Gastrocnemius medialis (tissue), 4 donors: ENCODE measurements at regions of chr19 and their contacts with region 1.

Region 1: GRCh38 chr19:56121180-56122167 is at the start of gene ZNF787:
- DNase-seq: peak; percentile 95 to 99
- ATAC-seq: peak; percentile 77 to 85
- H3K4me3 ChIP-seq: peak within 1 kb of the TSS; percentile 79 to 93 (median 88)
- H3K27ac ChIP-seq: peak within 1 kb of the TSS; percentile 92 to 99 (median 98)
- H3K4me1 ChIP-seq: peaks cover 35 to 54% of the 10 kb centered on the region in 2 donors
- H3K27me3 ChIP-seq: no peaks in the 10 kb centered on the region
- CTCF ChIP-seq: no peak
- POLR2A ChIP-seq: peak; percentile 54 to 60
- total RNA-seq, gene ZNF787: 16.7 to 43.0 (median 26.5) TPM

Region 2: DNA sequence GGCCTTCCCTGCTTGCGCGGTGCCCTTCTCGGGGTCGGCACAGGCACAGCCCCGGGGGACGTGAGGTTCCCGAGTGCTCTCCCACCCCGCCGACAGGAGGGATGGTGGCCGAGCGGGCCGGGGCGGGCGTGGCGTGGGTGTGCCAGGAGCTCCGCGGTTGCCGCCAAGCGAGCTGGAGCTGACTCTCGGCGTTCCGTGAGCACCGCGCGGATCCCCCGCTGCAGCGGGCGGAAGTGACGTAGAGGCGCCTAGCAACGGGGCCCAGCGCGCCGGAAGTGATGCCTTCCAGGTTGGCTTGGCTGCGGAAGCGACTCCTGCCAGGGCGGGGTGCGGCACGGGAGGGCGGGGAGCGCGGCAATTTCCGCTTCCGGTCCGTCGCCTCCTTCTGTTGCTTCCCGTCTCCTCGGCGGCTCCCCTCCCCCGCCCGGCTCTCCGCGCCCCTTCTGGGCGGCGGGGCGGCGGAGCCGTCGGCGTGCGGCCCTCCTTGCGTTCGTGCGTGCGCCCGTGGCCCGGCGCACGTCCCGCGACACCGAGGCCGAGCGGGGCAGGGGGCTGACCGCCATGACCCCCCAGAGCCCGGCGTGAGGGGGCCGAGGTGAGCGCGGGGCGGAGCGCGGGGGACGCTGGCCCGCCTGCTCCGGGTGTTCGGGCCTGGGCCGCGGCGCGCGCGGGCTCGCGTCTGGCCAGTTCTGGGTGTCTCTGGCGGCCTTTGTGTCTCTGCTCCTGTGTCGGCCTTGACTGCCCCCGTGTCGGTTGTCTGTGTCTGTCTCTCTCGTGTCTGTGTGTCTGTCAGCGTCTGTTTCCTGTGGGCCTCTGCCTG is 446.4 kb before region 1 on chr19 and contains the start of gene EPN1:
- in situ Hi-C with region 1: no loop called
- intact Hi-C with region 1: loop called (anchors 2 kb)
- DNase-seq: peak; percentile 95
- ATAC-seq: peak; percentile 93
- H3K4me3 ChIP-seq: peak within 1 kb of the TSS; percentile 76 to 89 (median 84)
- H3K27ac ChIP-seq: peak within 1 kb of the TSS; percentile 77 to 95 (median 87)
- H3K4me1 ChIP-seq: peaks cover 31 to 38% of the 10 kb centered on the region in 2 donors
- H3K27me3 ChIP-seq: no peaks in the 10 kb centered on the region
- CTCF ChIP-seq: peak in 2 of 5 experiments; percentile 7 to 8
- POLR2A ChIP-seq: peak; percentile 57 to 70
- total RNA-seq, gene EPN1: 58.7 to 214 (median 190) TPM

Region 3: DNA sequence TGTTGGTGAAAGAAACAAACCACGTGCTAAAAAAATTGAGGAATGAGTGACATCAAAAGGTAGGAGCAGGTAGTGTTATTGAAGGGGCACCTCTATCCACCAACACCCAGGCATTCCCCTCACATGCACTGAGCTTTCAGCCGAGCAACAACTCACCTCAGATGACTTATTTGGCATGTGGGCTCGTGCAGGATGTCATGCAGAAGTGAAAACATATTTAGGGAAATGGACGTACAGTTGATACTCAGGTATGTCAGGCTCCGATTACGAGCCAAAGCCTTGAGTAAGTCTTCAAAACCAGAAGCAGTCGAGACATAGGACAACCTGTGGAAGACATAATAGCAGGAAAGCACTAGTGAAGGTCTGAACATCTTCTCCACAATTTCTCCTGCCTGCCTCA is 320.1 kb before region 1 on chr19:
- in situ Hi-C with region 1: no loop called
- intact Hi-C with region 1: no loop called
- DNase-seq: no peak
- ATAC-seq: no peak
- H3K4me3 ChIP-seq: no peak overlapping the region
- H3K27ac ChIP-seq: no peak overlapping the region
- H3K4me1 ChIP-seq: no peaks in the 10 kb centered on the region
- H3K27me3 ChIP-seq: no peaks in the 10 kb centered on the region
- CTCF ChIP-seq: no peak
- POLR2A ChIP-seq: no peak